Activated B cell treated with CpG ODN at 0.5 μM for 24 hours (primary cell): ENCODE measurements at regions of chr12 and their contacts with region 1.

Region 1: GRCh38 chr12:47742253-47742825 is 16.3 kb downstream of the RAPGEF3 start:
- DNase-seq: peak; percentile 71
- ATAC-seq: peak; percentile 20
- H3K4me3 Mint-ChIP-seq: no peak overlapping the region
- H3K27ac Mint-ChIP-seq: peak overlapping the region; percentile 1
- H3K4me1 Mint-ChIP-seq: peaks cover 73% of the 10 kb centered on the region
- H3K27me3 Mint-ChIP-seq: no peaks in the 10 kb centered on the region
- CTCF ChIP-seq: no peak

Region 2: GRCh38 chr12:47651368-47652254 is 90.7 kb before region 1 on chr12:
- CTCF ChIA-PET with region 1: interaction called, 12 read pairs
- POLR2A ChIA-PET with region 1: no interaction called
- intact Hi-C with region 1: no loop called
- DNase-seq: no peak
- ATAC-seq: peak; percentile 90
- H3K4me3 Mint-ChIP-seq: no peak overlapping the region
- H3K27ac Mint-ChIP-seq: peak overlapping the region; percentile 35
- H3K4me1 Mint-ChIP-seq: peaks cover 15% of the 10 kb centered on the region
- H3K27me3 Mint-ChIP-seq: no peaks in the 10 kb centered on the region
- CTCF ChIP-seq: no peak

Region 3: GRCh38 chr12:47731723-47732122 is 10.6 kb before region 1 on chr12:
- CTCF ChIA-PET with region 1: interaction called, 91 read pairs
- POLR2A ChIA-PET with region 1: interaction called, 36 read pairs
- intact Hi-C with region 1: loop called (anchors 1 kb)
- DNase-seq: no peak
- ATAC-seq: no peak
- H3K4me3 Mint-ChIP-seq: no peak overlapping the region
- H3K27ac Mint-ChIP-seq: no peak overlapping the region
- H3K4me1 Mint-ChIP-seq: peaks cover 10% of the 10 kb centered on the region
- H3K27me3 Mint-ChIP-seq: no peaks in the 10 kb centered on the region
- CTCF ChIP-seq: no peak

Region 4: DNA sequence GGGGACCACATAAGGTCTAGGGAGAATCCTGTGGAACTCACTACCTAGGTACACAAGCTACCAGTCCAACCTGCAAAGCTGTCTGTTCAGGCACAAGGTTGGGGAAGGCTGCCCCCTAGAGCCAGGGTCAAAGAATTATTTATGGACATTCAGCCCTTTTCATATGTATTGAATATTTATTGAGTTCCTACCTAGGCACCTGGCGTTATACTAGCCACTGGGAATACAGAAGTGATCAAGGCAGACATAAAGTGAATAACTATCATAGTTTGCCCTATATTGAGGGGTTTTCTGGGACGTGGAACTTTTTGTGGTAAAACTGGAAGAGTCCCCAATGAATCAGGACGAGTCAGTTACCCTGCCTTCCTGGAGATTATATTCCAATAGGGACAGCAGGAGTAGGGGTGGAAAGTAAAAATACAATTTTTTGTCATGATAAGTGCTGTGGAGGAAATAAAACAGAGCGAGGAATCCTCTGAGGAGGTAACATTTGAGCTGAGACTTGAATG is 24.9 kb after region 1 on chr12:
- CTCF ChIA-PET with region 1: interaction called, 416 read pairs
- POLR2A ChIA-PET with region 1: interaction called, 48 read pairs
- intact Hi-C with region 1: loop called (anchors 1 kb)
- DNase-seq: peak; percentile 52
- ATAC-seq: peak; percentile 84
- H3K4me3 Mint-ChIP-seq: no peak overlapping the region
- H3K27ac Mint-ChIP-seq: no peak overlapping the region
- H3K4me1 Mint-ChIP-seq: peaks cover 9% of the 10 kb centered on the region
- H3K27me3 Mint-ChIP-seq: no peaks in the 10 kb centered on the region
- CTCF ChIP-seq: no peak

Region 5: GRCh38 chr12:47779301-47779942 is 37.1 kb after region 1 on chr12:
- CTCF ChIA-PET with region 1: interaction called, 416 read pairs
- POLR2A ChIA-PET with region 1: interaction called, 4 read pairs
- intact Hi-C with region 1: loop called (anchors 1 kb)
- DNase-seq: peak; percentile 90
- ATAC-seq: peak; percentile 93
- H3K4me3 Mint-ChIP-seq: no peak overlapping the region
- H3K27ac Mint-ChIP-seq: peak overlapping the region; percentile 41
- H3K4me1 Mint-ChIP-seq: peaks cover 15% of the 10 kb centered on the region
- H3K27me3 Mint-ChIP-seq: no peaks in the 10 kb centered on the region
- CTCF ChIP-seq: no peak

Region 6: GRCh38 chr12:47828608-47829536 is 86.5 kb after region 1 on chr12:
- CTCF ChIA-PET with region 1: interaction called, 11 read pairs
- POLR2A ChIA-PET with region 1: interaction called, 13 read pairs
- intact Hi-C with region 1: no loop called
- DNase-seq: no peak
- ATAC-seq: no peak
- H3K4me3 Mint-ChIP-seq: no peak overlapping the region
- H3K27ac Mint-ChIP-seq: no peak overlapping the region
- H3K4me1 Mint-ChIP-seq: peaks cover 54% of the 10 kb centered on the region
- H3K27me3 Mint-ChIP-seq: no peaks in the 10 kb centered on the region
- CTCF ChIP-seq: no peak